ENCODE measurements at regions of chr7 and their contacts with region 1.

Region 1: GRCh38 chr7:140003913-140004382 is 58.8 kb downstream of the PARP12 start:
- DNase-seq: peak; percentile 43
- H3K4me3 Mint-ChIP-seq: no peak overlapping the region
- H3K27ac Mint-ChIP-seq: no peak overlapping the region
- H3K4me1 Mint-ChIP-seq: no peaks in the 10 kb centered on the region
- H3K27me3 Mint-ChIP-seq: no peaks in the 10 kb centered on the region

Region 2: GRCh38 chr7:139500770-139501138 is 503.2 kb before region 1 on chr7:
- CTCF ChIA-PET with region 1: interaction called, 9 read pairs
- POLR2A ChIA-PET with region 1: no interaction called
- intact Hi-C with region 1: loop called (anchors 1 kb)
- DNase-seq: no peak
- H3K4me3 Mint-ChIP-seq: no peak overlapping the region
- H3K27ac Mint-ChIP-seq: no peak overlapping the region
- H3K4me1 Mint-ChIP-seq: peaks cover 2% of the 10 kb centered on the region
- H3K27me3 Mint-ChIP-seq: peaks cover 3% of the 10 kb centered on the region

Region 3: DNA sequence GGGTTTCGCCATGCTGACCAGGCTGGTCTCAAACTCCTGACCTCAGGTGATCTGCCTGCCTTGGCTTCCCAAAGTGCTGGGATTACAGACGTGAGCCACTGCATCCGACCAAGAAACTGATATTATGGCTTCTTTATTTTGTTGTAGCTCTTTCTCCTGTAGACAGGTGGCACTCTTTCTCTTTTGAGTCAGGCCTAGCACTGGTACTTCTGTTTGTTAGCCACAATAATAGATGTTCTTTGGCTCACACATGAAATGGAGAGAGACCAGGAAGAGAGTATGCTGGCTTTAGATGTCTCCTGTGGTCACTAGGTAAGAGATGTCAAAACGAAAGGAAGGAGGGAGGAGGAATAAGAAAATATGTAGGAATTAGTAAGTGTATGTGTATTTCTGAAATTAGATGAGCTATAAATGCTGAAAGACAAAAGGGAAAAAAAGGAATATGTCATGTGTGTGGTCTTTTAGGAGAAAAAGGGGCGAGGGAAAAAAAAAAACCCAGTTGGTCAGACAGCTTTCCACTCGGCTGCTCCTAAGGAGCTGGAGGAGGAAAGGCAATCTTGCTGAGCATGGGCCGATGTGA is 401.7 kb before region 1 on chr7:
- CTCF ChIA-PET with region 1: interaction called, 26 read pairs
- POLR2A ChIA-PET with region 1: no interaction called
- intact Hi-C with region 1: loop called (anchors 1 kb)
- DNase-seq: no peak
- H3K4me3 Mint-ChIP-seq: no peak overlapping the region
- H3K27ac Mint-ChIP-seq: no peak overlapping the region
- H3K4me1 Mint-ChIP-seq: no peaks in the 10 kb centered on the region
- H3K27me3 Mint-ChIP-seq: no peaks in the 10 kb centered on the region

Region 4: GRCh38 chr7:139620676-139621344 is 383.1 kb before region 1 on chr7:
- CTCF ChIA-PET with region 1: interaction called, 85 read pairs
- POLR2A ChIA-PET with region 1: no interaction called
- intact Hi-C with region 1: loop called (anchors 5 kb)
- DNase-seq: peak; percentile 78
- H3K4me3 Mint-ChIP-seq: no peak overlapping the region
- H3K27ac Mint-ChIP-seq: no peak overlapping the region
- H3K4me1 Mint-ChIP-seq: peaks cover 12% of the 10 kb centered on the region
- H3K27me3 Mint-ChIP-seq: no peaks in the 10 kb centered on the region

Region 5: GRCh38 chr7:139720705-139721231 is 283.2 kb before region 1 on chr7:
- CTCF ChIA-PET with region 1: no interaction called
- POLR2A ChIA-PET with region 1: no interaction called
- intact Hi-C with region 1: loop called (anchors 5 kb)
- DNase-seq: peak; percentile 33
- H3K4me3 Mint-ChIP-seq: no peak overlapping the region
- H3K27ac Mint-ChIP-seq: no peak overlapping the region
- H3K4me1 Mint-ChIP-seq: peaks cover 11% of the 10 kb centered on the region
- H3K27me3 Mint-ChIP-seq: no peaks in the 10 kb centered on the region

Region 6: DNA sequence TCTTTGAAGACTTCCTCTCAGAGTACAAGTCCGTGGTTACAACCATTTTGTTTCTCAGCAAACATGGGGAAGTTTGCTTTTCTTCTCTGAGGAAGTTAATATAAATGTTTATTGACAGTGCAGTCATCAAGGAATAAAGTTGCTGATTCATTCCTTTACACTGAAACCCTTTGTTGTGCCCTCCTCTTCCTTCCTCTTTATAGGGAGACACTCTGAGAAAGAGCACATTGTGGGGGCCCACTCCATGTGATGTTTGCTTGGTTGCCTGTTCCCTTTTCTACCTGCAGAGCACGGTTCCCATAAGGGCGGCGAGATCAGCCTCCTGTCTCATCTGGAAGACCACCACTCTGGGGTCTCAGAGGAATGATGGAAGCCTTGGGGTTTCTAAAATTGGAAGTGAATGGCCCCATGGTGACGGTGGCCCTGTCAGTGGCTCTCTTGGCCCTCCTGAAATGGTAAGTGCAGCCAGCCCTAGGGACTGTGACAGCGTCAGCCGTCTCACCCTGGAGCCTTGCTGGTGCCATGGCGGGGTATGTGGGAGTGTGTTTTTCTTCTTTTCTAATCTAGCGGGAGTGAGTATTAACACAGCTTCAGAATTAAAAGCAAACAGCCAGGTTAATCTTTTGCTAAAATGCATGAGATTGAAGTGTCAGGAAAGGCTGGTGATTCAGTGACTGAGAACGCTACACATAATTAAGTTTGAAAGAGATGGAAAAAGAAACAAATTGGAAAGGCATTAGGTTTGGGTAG is 174.7 kb before region 1 on chr7 and contains the start of gene TBXAS1:
- CTCF ChIA-PET with region 1: interaction called, 4 read pairs
- POLR2A ChIA-PET with region 1: no interaction called
- intact Hi-C with region 1: loop called (anchors 5 kb)
- DNase-seq: peak; percentile 36
- H3K4me3 Mint-ChIP-seq: peak within 1 kb of the TSS; percentile 73
- H3K27ac Mint-ChIP-seq: peak within 1 kb of the TSS; percentile 88
- H3K4me1 Mint-ChIP-seq: peaks cover 28% of the 10 kb centered on the region
- H3K27me3 Mint-ChIP-seq: peaks cover 4% of the 10 kb centered on the region
- total RNA-seq, gene TBXAS1: 4.8 to 5.3 TPM

Region 7: GRCh38 chr7:139972029-139972428 is 31.9 kb before region 1 on chr7:
- CTCF ChIA-PET with region 1: no interaction called
- POLR2A ChIA-PET with region 1: no interaction called
- intact Hi-C with region 1: no loop called
- DNase-seq: no peak
- H3K4me3 Mint-ChIP-seq: no peak overlapping the region
- H3K27ac Mint-ChIP-seq: no peak overlapping the region
- H3K4me1 Mint-ChIP-seq: no peaks in the 10 kb centered on the region
- H3K27me3 Mint-ChIP-seq: no peaks in the 10 kb centered on the region

Region 8: GRCh38 chr7:140084972-140085371 is 81.0 kb after region 1 on chr7:
- CTCF ChIA-PET with region 1: no interaction called
- POLR2A ChIA-PET with region 1: no interaction called
- intact Hi-C with region 1: no loop called
- DNase-seq: peak; percentile 71
- H3K4me3 Mint-ChIP-seq: no peak overlapping the region
- H3K27ac Mint-ChIP-seq: peak overlapping the region; percentile 26
- H3K4me1 Mint-ChIP-seq: peaks cover 23% of the 10 kb centered on the region
- H3K27me3 Mint-ChIP-seq: no peaks in the 10 kb centered on the region